ENCODE measurements at regions of chr22 and their contacts with region 1.

Region 1: DNA sequence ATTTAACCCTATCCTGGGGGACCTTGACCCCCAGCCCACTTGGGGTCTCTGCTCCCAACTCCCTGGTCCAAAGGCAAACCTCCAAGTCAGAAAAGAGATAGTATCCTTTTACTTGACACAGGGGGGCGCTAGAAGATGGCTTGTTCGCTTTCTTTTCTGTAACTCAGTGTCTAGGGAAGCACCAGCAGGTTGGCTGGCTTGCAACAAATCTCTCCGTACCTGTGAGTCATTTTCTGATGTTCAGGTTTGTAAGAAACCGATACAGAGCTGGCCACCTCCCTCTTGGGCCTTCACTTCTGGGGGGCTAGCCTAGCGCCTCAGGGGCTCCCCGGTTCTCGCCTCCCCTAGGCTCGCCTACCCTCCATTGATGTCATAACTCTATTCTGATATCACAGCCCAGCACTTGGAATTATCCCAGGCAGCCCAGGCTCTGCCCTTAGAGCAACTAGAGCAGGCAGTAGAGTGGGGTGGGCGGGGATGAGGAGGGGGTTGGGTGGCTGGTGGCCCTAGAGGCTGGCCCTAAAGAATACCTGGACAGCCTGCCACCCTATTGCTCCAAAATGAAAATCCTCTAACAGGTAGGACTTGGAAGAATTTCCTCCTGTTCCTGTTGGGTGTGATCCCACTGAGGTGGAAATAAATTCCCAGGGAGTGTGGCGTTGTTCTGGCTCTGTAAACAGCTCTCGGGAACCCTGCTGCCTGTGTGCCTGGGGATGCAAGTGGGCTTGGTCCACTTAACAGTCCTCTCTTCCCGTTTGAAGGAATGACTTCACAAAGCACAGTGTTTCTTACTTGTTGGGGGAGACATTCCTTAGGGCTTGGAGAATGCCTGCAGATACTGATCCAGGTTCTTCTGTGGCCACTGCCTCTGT is 69.4 kb downstream of the OSBP2 start:
- DNase-seq: peak; percentile 59 to 84
- ATAC-seq: peak; percentile 94
- H3K4me3 ChIP-seq: no peak overlapping the region
- H3K27ac ChIP-seq: peak overlapping the region; percentile 46 to 84
- H3K4me1 ChIP-seq: peaks cover 11% of the 10 kb centered on the region
- CTCF ChIP-seq: peak; percentile 81
- EP300 ChIP-seq: no peak
- POLR2A ChIP-seq: no peak
- RAD21 ChIP-seq: peak; percentile 90 to 93

Region 2: DNA sequence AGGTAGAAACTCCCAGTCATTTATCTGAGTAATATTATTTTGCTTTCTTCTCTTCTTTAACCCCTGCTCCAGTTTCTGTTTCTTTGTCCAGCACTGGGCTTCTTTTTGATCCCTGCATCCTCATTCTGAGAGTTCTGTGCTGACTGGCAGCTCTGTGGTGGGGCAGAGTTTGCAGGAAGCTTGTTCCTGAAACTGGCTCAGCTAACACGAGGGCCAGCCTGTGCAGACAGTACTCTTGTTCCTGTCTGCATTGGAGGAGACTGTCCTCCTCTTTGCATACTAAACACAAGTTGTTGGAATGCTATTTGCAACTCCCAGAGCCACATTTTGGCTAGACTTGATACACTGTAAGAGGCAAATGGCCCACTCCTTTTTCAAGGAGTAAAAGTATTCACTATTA is 776.9 kb before region 1 on chr22:
- CTCF ChIA-PET with region 1: no interaction called
- POLR2A ChIA-PET with region 1: no interaction called
- DNase-seq: no peak
- ATAC-seq: no peak
- H3K4me3 ChIP-seq: no peak overlapping the region
- H3K27ac ChIP-seq: no peak overlapping the region
- H3K4me1 ChIP-seq: no peaks in the 10 kb centered on the region
- CTCF ChIP-seq: no peak
- EP300 ChIP-seq: no peak
- POLR2A ChIP-seq: no peak
- RAD21 ChIP-seq: no peak

Region 3: DNA sequence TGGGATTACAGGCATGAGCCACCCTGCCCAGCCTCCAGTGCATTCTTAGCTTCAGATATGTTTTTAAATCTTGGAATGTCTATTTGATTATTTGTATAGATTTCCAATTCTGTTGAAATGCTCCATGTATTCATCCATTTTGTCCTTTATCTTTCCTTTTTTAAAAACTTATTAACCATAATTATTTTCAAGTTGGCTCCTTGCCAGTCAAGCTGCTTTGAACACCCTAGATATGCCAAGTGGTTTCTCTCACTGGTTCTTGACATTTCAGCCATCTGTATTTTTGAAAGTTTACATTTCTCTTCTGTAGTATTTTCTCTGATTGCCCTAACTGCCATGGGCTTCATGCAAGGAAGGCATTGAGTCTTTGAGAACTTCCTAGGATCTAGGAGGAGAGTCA is 31.7 kb after region 1 on chr22:
- CTCF ChIA-PET with region 1: no interaction called
- POLR2A ChIA-PET with region 1: no interaction called
- DNase-seq: no peak
- ATAC-seq: no peak
- H3K4me3 ChIP-seq: no peak overlapping the region
- H3K27ac ChIP-seq: no peak overlapping the region
- H3K4me1 ChIP-seq: no peaks in the 10 kb centered on the region
- CTCF ChIP-seq: no peak
- EP300 ChIP-seq: no peak
- POLR2A ChIP-seq: no peak
- RAD21 ChIP-seq: no peak

Region 4: DNA sequence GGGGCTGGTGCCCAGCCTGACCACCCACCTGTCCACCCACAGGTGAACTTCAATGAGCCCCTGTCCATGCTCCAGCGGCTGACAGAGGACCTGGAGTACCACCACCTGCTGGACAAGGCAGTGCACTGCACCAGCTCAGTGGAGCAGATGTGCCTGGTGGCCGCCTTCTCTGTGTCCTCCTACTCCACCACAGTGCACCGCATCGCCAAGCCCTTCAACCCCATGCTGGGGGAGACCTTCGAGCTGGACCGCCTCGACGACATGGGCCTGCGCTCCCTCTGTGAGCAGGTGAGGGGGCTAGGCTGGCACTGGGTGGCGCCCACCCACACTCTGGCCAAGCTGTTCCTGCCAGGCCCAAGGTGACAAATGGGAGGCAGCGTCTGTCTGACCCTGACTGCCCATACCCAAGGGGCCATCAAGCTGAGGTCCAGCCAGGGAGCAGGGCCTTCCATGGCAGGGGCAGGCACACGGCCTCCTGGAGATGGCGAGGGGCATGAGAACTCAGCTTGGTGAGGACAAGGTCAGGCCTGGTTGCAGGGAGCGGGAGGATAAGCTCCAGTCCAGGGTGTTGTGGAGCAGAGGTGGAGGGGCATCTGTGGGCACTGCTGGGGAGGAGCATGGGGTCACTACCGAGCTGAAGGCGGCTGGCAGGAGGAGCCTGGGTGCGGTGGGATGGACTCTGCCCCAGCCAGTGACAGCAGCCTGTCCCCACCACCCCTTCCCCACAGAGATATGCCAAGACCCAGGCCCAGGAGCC is 126.8 kb after region 1 on chr22:
- CTCF ChIA-PET with region 1: interaction called, 14 read pairs
- POLR2A ChIA-PET with region 1: no interaction called
- DNase-seq: peak; percentile 30 to 36
- ATAC-seq: peak; percentile 54 to 91; a peak in 4 of 6 replicates
- H3K4me3 ChIP-seq: no peak overlapping the region
- H3K27ac ChIP-seq: peak overlapping the region; percentile 44 to 75; a peak in 4 of 6 replicates
- H3K4me1 ChIP-seq: no peaks in the 10 kb centered on the region
- CTCF ChIP-seq: peak; percentile 50
- EP300 ChIP-seq: no peak
- POLR2A ChIP-seq: no peak
- RAD21 ChIP-seq: peak; percentile 44 to 50

Region 5: GRCh38 chr22:30908051-30908461 is 144.0 kb after region 1 on chr22:
- CTCF ChIA-PET with region 1: interaction called, 11 read pairs
- POLR2A ChIA-PET with region 1: no interaction called
- DNase-seq: no peak
- ATAC-seq: no peak
- H3K4me3 ChIP-seq: no peak overlapping the region
- H3K27ac ChIP-seq: no peak overlapping the region
- H3K4me1 ChIP-seq: no peaks in the 10 kb centered on the region
- CTCF ChIP-seq: no peak
- EP300 ChIP-seq: no peak
- POLR2A ChIP-seq: no peak
- RAD21 ChIP-seq: no peak

Region 6: GRCh38 chr22:30931541-30932300 is 167.7 kb after region 1 on chr22:
- CTCF ChIA-PET with region 1: interaction called, 14 read pairs
- POLR2A ChIA-PET with region 1: no interaction called
- DNase-seq: no peak
- ATAC-seq: no peak
- H3K4me3 ChIP-seq: no peak overlapping the region
- H3K27ac ChIP-seq: no peak overlapping the region
- H3K4me1 ChIP-seq: no peaks in the 10 kb centered on the region
- CTCF ChIP-seq: no peak
- EP300 ChIP-seq: no peak
- POLR2A ChIP-seq: no peak
- RAD21 ChIP-seq: no peak